ENCODE measurements at regions of chr1 and their contacts with region 1.

Region 1: DNA sequence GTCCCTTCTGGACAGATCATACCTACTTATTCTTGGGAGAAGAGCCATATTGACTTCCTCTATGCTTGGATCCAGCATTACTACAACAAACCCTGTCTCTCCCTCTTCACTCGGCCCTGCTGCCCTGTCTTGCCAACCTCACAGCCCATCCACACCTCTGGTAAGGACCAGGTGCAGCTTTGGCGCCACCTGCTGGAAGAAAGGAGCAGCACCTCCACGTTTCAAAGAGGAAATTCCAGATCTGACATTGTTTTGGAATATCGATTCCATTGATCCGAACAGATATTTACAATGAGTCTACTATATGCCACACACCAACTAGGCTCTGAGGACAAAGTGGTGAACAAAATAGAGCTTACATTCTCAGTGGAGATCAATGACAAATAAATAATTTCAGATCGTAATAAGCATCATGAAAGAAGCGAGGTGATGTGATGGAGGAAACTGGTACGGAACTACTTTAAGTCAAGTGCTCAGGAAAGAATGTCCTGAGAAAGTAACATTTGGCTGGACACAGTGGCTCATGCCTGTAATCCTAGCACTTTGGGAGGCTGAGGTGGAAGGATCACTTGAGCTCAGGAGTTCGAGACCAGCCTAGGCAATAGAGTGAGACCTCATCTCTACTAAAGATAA is 18.7 kb downstream of the MFSD2A start:
- DNase-seq: peak; percentile 56
- ATAC-seq: peak; percentile 87
- H3K4me3 ChIP-seq: no peak overlapping the region
- H3K27ac ChIP-seq: no peak overlapping the region
- H3K4me1 ChIP-seq: no peaks in the 10 kb centered on the region
- H3K27me3 ChIP-seq: no peaks in the 10 kb centered on the region
- CTCF ChIP-seq: peak; percentile 95
- POLR2A ChIP-seq: no peak
- RAD21 ChIP-seq: peak; percentile 97

Region 2: GRCh38 chr1:39816415-39817090 is 157.1 kb before region 1 on chr1:
- CTCF ChIA-PET with region 1: no interaction called
- POLR2A ChIA-PET with region 1: no interaction called
- dilution Hi-C with region 1: no loop called
- in situ Hi-C with region 1: loop called (anchors 5 kb)
- intact Hi-C with region 1: loop called (anchors 1 kb)
- DNase-seq: peak; percentile 91
- ATAC-seq: peak; percentile 95
- H3K4me3 ChIP-seq: no peak overlapping the region
- H3K27ac ChIP-seq: no peak overlapping the region
- H3K4me1 ChIP-seq: no peaks in the 10 kb centered on the region
- H3K27me3 ChIP-seq: peaks cover 8% of the 10 kb centered on the region
- CTCF ChIP-seq: peak; percentile 84
- POLR2A ChIP-seq: 0 out of 2 replicates have a peak, but pooled peaks have one; percentile 25
- RAD21 ChIP-seq: peak; percentile 85

Region 3: GRCh38 chr1:39822091-39822490 is 151.5 kb before region 1 on chr1:
- CTCF ChIA-PET with region 1: no interaction called
- POLR2A ChIA-PET with region 1: no interaction called
- dilution Hi-C with region 1: no loop called
- in situ Hi-C with region 1: loop called (anchors 5 kb)
- intact Hi-C with region 1: no loop called
- DNase-seq: no peak
- ATAC-seq: no peak
- H3K4me3 ChIP-seq: no peak overlapping the region
- H3K27ac ChIP-seq: no peak overlapping the region
- H3K4me1 ChIP-seq: no peaks in the 10 kb centered on the region
- H3K27me3 ChIP-seq: peaks cover 13% of the 10 kb centered on the region
- CTCF ChIP-seq: no peak
- POLR2A ChIP-seq: no peak
- RAD21 ChIP-seq: no peak

Region 4: DNA sequence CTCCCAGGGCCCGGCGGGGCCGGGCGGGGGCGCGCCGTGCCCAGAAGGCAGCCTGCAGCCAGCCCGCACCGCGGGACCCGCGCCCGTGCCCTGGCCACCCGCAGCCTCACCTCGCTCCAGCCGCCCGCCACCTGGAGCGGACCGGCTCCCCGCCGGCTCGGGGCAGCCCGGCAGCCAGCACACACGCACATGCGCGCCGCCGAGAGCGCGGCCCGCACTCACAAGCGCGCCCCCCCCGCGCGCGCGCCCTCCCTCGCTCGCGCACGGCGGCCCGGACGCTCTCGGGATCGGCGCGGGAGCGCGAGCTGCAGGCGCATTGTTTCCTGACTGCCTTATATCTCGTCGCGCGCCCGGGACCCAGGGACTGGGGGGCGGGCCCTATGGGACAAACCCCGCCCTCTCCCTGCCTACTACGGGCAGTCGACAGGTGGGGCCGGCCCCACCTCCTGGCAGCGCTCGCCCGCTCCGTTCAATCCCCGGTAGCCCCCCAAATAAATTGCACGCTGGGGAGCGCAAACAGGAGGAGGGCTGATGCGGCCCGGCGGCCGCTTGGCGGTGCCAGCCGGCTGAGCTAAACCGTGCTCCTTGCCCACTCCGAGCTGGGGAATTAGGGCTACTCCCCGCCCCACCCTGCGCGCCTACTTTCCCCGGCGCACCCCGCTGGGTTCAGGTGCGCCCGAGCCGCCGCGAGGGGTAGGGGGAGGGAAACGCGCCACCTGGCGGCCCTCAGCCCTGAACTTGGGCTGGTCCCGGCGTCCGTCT is 71.7 kb before region 1 on chr1 and contains the start of gene MYCL:
- CTCF ChIA-PET with region 1: interaction called, 4 read pairs
- POLR2A ChIA-PET with region 1: no interaction called
- dilution Hi-C with region 1: no loop called
- in situ Hi-C with region 1: no loop called
- intact Hi-C with region 1: loop called (anchors 5 kb)
- DNase-seq: peak; percentile 60
- ATAC-seq: peak; percentile 67
- H3K4me3 ChIP-seq: peak within 1 kb of the TSS; percentile 45
- H3K27ac ChIP-seq: no peak within 1 kb of the TSS
- H3K4me1 ChIP-seq: peaks cover 4% of the 10 kb centered on the region; the same call in 1 of the 2 replicates
- H3K27me3 ChIP-seq: peaks cover 22% of the 10 kb centered on the region
- CTCF ChIP-seq: peak; percentile 53
- POLR2A ChIP-seq: no peak
- RAD21 ChIP-seq: peak; percentile 54
- total RNA-seq, gene MYCL: 0.56 and 0.72 TPM in 2 replicates

Region 5: DNA sequence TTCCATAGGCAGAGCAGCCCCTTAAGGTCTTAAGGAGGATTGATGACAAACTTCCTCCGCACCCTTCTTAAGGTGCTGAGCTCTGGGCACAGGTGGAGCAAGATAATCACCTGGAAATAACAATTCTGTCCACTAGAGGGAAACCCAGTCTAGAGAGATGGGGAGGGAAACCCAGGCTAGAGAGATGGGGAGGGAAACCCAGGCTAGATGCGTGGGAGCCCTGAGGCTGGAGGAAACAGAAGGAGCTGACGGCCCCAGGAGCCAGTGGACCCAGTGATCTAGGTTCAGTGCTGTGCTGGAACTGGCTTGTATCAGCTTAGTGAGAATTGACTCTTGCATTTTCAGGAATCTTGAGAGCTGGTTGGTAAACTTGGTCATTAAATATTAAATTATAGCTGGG is 54.1 kb before region 1 on chr1:
- CTCF ChIA-PET with region 1: interaction called, 11 read pairs
- POLR2A ChIA-PET with region 1: no interaction called
- dilution Hi-C with region 1: no loop called
- in situ Hi-C with region 1: loop called (anchors 5 kb)
- intact Hi-C with region 1: loop called (anchors 1 kb)
- DNase-seq: peak; percentile 58
- ATAC-seq: peak; percentile 89
- H3K4me3 ChIP-seq: no peak overlapping the region
- H3K27ac ChIP-seq: no peak overlapping the region
- H3K4me1 ChIP-seq: no peaks in the 10 kb centered on the region
- H3K27me3 ChIP-seq: peaks cover 15% of the 10 kb centered on the region
- CTCF ChIP-seq: peak; percentile 76
- POLR2A ChIP-seq: no peak
- RAD21 ChIP-seq: peak; percentile 78

Region 6: DNA sequence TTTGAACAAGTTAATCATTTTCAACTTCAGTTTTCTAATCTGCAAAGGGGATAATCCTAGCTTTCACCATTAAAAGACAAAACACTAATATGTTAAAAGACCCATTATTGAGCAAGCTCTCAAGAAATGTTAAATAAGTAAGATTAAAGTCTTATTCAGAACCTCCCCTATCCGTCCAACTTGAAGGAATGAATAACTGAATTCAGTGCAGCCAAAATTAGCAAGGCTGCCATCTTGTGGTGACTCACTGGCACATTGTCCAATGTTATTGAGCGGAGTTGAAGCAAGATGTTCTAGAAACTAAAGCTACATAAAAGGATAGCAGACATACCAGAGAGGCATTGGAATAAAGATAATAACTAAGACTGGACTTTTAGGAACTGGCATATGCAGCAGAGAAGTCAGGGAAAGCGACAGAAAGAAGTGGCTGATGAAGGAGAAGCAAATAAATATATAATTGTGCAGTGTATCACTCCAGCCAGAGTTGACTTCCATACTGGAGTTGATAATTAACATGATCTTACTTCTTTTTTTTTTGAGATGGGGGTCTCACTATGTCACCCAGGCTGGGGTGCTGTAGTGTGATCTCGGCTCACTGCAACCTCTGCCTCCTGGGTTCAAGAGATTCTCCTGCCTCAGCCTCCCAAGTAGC is 58.7 kb after region 1 on chr1:
- CTCF ChIA-PET with region 1: interaction called, 4 read pairs
- POLR2A ChIA-PET with region 1: no interaction called
- dilution Hi-C with region 1: no loop called
- in situ Hi-C with region 1: no loop called
- intact Hi-C with region 1: loop called (anchors 2 kb)
- DNase-seq: peak; percentile 76
- ATAC-seq: peak; percentile 80
- H3K4me3 ChIP-seq: no peak overlapping the region
- H3K27ac ChIP-seq: no peak overlapping the region
- H3K4me1 ChIP-seq: peaks cover 5% of the 10 kb centered on the region
- H3K27me3 ChIP-seq: no peaks in the 10 kb centered on the region
- CTCF ChIP-seq: peak; percentile 74
- POLR2A ChIP-seq: no peak
- RAD21 ChIP-seq: peak; percentile 70

Region 7: DNA sequence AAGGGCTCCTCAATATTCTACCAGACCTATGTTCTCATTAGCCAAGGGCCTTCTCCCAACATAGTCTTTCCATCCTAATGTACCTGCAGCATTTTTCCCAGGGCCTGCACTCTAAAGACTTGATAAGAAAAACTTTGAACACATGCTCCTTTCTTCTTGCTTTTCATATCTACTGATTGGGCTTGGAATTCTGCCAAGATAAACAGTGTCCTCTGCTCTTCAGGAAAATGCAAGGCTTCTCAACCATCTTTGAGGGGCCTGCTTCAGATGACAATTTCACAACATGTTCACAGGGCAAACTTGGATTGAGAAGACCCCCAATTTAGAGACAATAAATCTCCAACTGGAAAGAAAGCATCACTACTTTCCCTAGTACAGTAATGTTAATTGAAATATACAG is 149.2 kb after region 1 on chr1:
- CTCF ChIA-PET with region 1: no interaction called
- POLR2A ChIA-PET with region 1: no interaction called
- dilution Hi-C with region 1: no loop called
- in situ Hi-C with region 1: no loop called
- intact Hi-C with region 1: no loop called
- DNase-seq: no peak
- ATAC-seq: no peak
- H3K4me3 ChIP-seq: no peak overlapping the region
- H3K27ac ChIP-seq: no peak overlapping the region
- H3K4me1 ChIP-seq: no peaks in the 10 kb centered on the region
- H3K27me3 ChIP-seq: peaks cover 31% of the 10 kb centered on the region
- CTCF ChIP-seq: no peak
- POLR2A ChIP-seq: no peak
- RAD21 ChIP-seq: no peak